ENCODE measurements at regions of chr14 and their contacts with region 1.

Region 1: GRCh38 chr14:91059576-91060350 is 678 bp downstream of the RPS6KA5 start:
- DNase-seq: peak; percentile 72
- H3K4me3 Mint-ChIP-seq: no peak overlapping the region
- H3K27ac Mint-ChIP-seq: no peak overlapping the region
- H3K4me1 Mint-ChIP-seq: peaks cover 12% of the 10 kb centered on the region
- H3K27me3 Mint-ChIP-seq: no peaks in the 10 kb centered on the region
- CTCF ChIP-seq: no peak

Region 2: GRCh38 chr14:91009501-91010152 is 50.1 kb before region 1 on chr14:
- CTCF ChIA-PET with region 1: interaction called, 4 read pairs
- intact Hi-C with region 1: loop called (anchors 2 kb)
- DNase-seq: no peak
- H3K4me3 Mint-ChIP-seq: no peak overlapping the region
- H3K27ac Mint-ChIP-seq: no peak overlapping the region
- H3K4me1 Mint-ChIP-seq: peaks cover 49% of the 10 kb centered on the region
- H3K27me3 Mint-ChIP-seq: no peaks in the 10 kb centered on the region
- CTCF ChIP-seq: no peak

Region 3: DNA sequence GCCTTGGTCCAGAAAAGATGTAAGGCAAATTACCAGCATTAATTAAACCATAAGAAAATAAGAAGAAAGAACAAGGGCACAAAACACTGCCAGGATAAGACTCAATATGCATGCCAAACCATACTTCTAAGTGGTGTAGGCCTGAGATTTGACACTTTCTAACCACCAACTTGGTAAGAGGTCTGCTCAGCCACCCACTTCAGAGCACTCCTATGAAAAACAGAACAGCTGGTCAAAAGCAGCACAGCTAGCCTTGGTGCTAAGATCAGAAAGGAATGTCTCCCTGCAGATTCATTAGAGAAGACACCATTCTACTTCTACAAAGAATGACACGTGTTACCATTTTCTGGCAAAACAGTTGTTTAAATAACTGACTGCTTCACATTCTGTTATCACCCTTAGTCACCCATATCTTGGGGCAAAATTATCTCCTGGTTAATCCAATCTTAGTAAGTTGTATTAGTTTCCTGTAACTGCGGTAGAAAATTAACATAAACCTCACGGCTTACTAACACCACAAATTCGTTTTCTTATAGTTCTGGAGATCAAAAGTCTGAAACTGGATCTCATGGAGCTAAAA is 12.5 kb before region 1 on chr14:
- CTCF ChIA-PET with region 1: interaction called, 15 read pairs
- intact Hi-C with region 1: no loop called
- DNase-seq: no peak
- H3K4me3 Mint-ChIP-seq: no peak overlapping the region
- H3K27ac Mint-ChIP-seq: no peak overlapping the region
- H3K4me1 Mint-ChIP-seq: peaks cover 19% of the 10 kb centered on the region
- H3K27me3 Mint-ChIP-seq: no peaks in the 10 kb centered on the region
- CTCF ChIP-seq: no peak

Region 4: GRCh38 chr14:91138511-91139359 is 79.0 kb after region 1 on chr14:
- CTCF ChIA-PET with region 1: no interaction called
- intact Hi-C with region 1: loop called (anchors 5 kb)
- DNase-seq: peak; percentile 50
- H3K4me3 Mint-ChIP-seq: no peak overlapping the region
- H3K27ac Mint-ChIP-seq: no peak overlapping the region
- H3K4me1 Mint-ChIP-seq: no peaks in the 10 kb centered on the region
- H3K27me3 Mint-ChIP-seq: no peaks in the 10 kb centered on the region
- CTCF ChIP-seq: peak; percentile 40

Measured in Calu3 (cell line).